Calu3 (cell line): ENCODE measurements at regions of chr3 and their contacts with region 1.

Region 1: GRCh38 chr3:188468662-188469061 is 314.7 kb downstream of the LPP start:
- DNase-seq: no peak
- H3K4me3 Mint-ChIP-seq: no peak overlapping the region
- H3K27ac Mint-ChIP-seq: no peak overlapping the region
- H3K4me1 Mint-ChIP-seq: peaks cover 21% of the 10 kb centered on the region
- H3K27me3 Mint-ChIP-seq: no peaks in the 10 kb centered on the region
- CTCF ChIP-seq: no peak

Region 2: DNA sequence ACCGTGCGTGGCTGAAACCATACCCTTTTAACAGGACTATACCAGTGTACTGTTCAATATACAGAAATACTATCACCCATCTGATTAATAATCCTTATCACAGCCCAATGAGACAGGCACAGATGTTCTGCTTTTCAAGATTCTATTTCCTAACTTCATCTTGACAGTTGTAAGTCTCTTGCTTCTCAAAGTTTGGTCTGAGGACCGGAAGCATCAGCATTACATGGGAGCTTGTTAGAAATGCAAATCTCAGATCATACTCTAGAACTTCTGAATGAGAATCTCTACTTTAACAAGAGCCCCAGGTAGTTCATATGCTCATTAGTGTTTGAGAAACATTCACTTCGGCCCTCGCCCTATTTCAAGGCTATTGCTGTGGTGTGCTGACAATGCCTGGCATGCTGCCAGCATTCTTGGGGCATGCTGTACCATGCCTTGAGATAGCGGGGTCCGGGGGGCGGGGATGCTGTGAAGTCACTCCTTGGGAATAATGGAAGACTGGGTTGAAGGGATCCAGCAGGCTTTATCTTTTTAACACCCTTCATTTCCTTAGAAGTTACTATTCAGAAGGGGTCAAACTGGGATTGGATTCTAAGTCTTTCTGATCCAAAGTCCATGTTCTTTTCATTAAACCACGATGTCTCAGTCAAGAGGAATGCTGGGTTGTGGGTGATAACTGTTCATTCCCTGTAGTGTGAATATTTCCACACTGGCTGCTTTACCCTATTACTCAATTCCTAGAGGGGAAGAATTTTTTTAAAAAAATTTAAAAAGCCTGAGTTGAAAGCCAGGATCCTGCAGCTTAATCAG is 120.0 kb before region 1 on chr3:
- CTCF ChIA-PET with region 1: interaction called, 10 read pairs
- intact Hi-C with region 1: no loop called
- DNase-seq: peak; percentile 88
- H3K4me3 Mint-ChIP-seq: peak overlapping the region; percentile 18
- H3K27ac Mint-ChIP-seq: peak overlapping the region; percentile 69
- H3K4me1 Mint-ChIP-seq: peaks cover 65% of the 10 kb centered on the region
- H3K27me3 Mint-ChIP-seq: no peaks in the 10 kb centered on the region
- CTCF ChIP-seq: no peak

Region 3: GRCh38 chr3:188370081-188370830 is 98.4 kb before region 1 on chr3:
- CTCF ChIA-PET with region 1: no interaction called
- intact Hi-C with region 1: no loop called
- DNase-seq: peak; percentile 28
- H3K4me3 Mint-ChIP-seq: no peak overlapping the region
- H3K27ac Mint-ChIP-seq: peak overlapping the region; percentile 39
- H3K4me1 Mint-ChIP-seq: peaks cover 49% of the 10 kb centered on the region
- H3K27me3 Mint-ChIP-seq: no peaks in the 10 kb centered on the region
- CTCF ChIP-seq: no peak

Region 4: GRCh38 chr3:188520466-188520865 is 51.8 kb after region 1 on chr3:
- CTCF ChIA-PET with region 1: no interaction called
- intact Hi-C with region 1: no loop called
- DNase-seq: no peak
- H3K4me3 Mint-ChIP-seq: no peak overlapping the region
- H3K27ac Mint-ChIP-seq: no peak overlapping the region
- H3K4me1 Mint-ChIP-seq: peaks cover 8% of the 10 kb centered on the region
- H3K27me3 Mint-ChIP-seq: no peaks in the 10 kb centered on the region
- CTCF ChIP-seq: no peak

Region 5: DNA sequence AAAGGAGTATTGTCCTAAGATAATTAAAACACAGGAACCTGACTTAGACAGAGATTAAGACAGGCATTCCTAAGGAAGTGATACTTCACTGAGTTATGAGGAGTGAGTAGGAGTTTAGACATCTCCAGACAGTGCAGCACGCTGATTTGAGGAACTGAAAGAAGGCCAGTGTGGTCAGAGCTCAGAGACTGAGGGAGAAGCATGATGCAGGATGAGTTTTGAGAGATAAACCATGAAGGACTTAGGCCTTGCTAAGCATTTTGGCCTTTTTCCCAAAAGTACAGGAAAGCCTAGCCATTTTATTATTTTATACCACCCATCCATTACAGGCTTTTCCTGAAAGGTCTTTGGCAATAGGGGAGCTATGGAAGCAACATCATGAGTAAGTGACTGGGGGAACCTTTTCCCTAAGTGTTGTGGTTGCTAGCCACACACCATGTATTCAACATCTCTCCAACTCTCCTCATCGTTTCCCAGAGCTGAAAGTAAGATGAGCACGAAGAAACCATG is 327.5 kb after region 1 on chr3:
- CTCF ChIA-PET with region 1: no interaction called
- intact Hi-C with region 1: no loop called
- DNase-seq: no peak
- H3K4me3 Mint-ChIP-seq: no peak overlapping the region
- H3K27ac Mint-ChIP-seq: no peak overlapping the region
- H3K4me1 Mint-ChIP-seq: no peaks in the 10 kb centered on the region
- H3K27me3 Mint-ChIP-seq: no peaks in the 10 kb centered on the region
- CTCF ChIP-seq: no peak